Vagina (tissue), 2 donors: ENCODE measurements at regions of chr22 and their contacts with region 1.

Region 1: DNA sequence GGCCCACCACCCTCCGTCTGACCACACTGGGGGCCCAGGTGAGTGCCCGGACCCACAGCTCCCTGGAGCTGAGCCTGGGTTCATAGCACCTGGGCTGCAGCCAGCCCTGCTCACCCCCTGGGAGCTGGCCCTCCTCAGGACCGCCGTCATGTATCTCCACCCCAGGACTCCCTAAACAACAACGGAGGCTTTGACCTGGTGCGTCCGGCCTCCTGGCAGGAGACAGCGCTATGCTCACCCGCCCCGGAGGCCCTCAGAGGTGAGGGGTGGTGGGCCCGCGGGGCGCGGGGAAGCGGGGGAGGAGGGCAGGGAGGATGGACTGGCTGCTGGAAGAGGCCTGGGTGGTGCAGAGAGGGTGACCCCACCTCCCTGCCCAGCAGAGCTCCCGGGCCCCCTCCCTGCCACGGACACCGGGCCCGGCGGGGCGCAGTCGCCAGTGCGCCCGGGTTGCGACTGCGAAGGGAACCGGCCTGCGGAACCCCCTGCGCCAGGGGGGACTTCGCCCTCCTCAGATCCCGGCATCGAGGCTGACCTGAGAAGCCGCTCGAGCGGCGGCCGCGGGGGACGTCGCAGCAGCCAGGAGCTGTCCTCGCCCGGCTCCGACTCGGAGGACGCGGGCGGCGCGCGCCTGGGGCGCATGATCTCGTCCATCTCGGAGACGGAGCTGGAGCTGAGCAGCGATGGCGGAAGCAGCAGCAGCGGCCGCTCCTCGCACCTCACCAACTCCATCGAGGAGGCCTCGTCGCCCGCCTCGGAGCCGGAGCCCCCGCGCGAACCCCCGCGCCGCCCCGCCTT is 3.1 kb downstream of the MAPK8IP2 start:
- DNase-seq: no peak
- H3K4me3 ChIP-seq: no peak overlapping the region
- H3K27ac ChIP-seq: no peak overlapping the region
- H3K4me1 ChIP-seq: peaks cover 8% of the 10 kb centered on the region
- H3K27me3 ChIP-seq: no peaks in the 10 kb centered on the region
- CTCF ChIP-seq: no peak
- POLR2A ChIP-seq: no peak

Region 2: DNA sequence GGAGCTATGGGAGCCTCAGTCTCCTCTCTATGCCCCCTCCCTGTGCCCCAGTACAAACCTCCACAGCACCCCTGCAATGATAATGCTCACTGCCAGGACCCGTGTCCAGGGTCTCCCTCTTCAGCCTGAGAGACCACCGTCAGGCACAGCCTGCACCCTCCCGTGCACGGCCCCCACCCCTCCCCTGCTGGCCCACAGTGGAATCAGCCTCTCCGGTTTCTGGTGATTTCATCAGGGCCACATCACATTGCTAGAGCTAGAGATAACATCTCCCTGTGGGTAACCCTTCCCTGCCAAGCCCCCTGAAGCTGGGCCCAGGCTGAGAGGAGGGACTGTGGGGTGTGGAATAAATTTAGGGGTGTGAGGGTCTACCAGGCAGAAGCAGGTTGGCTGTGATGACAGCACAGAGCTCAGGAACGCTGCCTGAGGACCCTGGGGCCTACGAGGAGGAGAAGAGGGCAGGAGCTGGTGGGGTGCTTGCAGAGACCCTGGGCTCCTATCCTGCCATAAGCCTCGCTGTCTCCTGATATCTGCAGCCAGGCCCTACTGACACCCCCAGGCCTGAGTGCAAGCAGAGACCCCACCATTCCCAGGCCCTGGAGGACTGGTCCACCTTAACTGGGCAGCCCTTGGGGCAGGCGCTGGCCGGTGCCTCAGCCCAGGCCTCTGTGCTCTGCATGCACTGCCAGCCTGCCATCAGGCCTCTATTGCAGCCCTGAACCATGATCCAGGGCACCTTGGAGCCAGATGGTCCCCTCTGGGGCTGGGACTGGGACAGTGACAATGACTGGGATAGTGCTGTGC is 57.9 kb before region 1 on chr22 and contains the start of gene KLHDC7B:
- intact Hi-C with region 1: no loop called
- DNase-seq: no peak
- H3K4me3 ChIP-seq: no peak within 1 kb of the TSS
- H3K27ac ChIP-seq: peak within 1 kb of the TSS; percentile 72
- H3K4me1 ChIP-seq: peaks cover 36% of the 10 kb centered on the region
- H3K27me3 ChIP-seq: peaks cover 7% of the 10 kb centered on the region
- CTCF ChIP-seq: no peak
- POLR2A ChIP-seq: no peak
- total RNA-seq, gene KLHDC7B: 0.49 TPM

Region 3: DNA sequence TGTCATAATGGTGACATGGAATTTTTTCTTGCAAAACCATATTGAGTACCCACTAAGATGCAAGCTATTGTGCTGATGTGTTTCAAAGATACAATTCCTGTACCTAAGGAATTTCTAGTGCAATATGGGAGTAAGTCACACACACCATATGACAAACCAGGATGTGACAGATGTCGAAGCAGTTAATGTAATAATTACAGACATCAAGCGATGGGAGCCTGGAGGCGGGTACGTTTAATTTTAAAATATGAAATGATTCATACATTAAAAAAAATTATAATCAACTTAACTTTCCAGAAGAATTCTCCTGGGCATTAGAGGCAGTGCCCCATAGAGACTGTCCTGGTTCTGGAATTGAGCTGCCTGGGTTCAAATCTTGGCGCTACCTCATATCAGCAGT is 47.0 kb before region 1 on chr22:
- intact Hi-C with region 1: loop called (anchors 2 kb)
- DNase-seq: no peak
- H3K4me3 ChIP-seq: no peak overlapping the region
- H3K27ac ChIP-seq: no peak overlapping the region
- H3K4me1 ChIP-seq: no peaks in the 10 kb centered on the region
- H3K27me3 ChIP-seq: no peaks in the 10 kb centered on the region
- CTCF ChIP-seq: no peak
- POLR2A ChIP-seq: no peak